ENCODE measurements at regions of chr19 and their contacts with region 1.

Region 1: GRCh38 chr19:47305309-47305751 is 4.3 kb upstream of the C5AR1 start:
- DNase-seq: peak; percentile 78 to 94 (median 80)
- H3K4me3 ChIP-seq: no peak overlapping the region
- H3K4me3 Mint-ChIP-seq: peak overlapping the region in 1 of 2 donors; percentile 23
- H3K27ac ChIP-seq: no peak overlapping the region
- H3K27ac Mint-ChIP-seq: peak overlapping the region in 3 of 7 donors; percentile 16 to 63 (median 42)
- H3K4me1 ChIP-seq: peaks cover 45 to 60% of the 10 kb centered on the region in 2 donors
- H3K4me1 Mint-ChIP-seq: peaks cover 44% of the 10 kb centered on the region
- H3K27me3 ChIP-seq: no peaks in the 10 kb centered on the region
- H3K27me3 Mint-ChIP-seq: peaks cover 7 to 24% (median 19%) of the 10 kb centered on the region in 3 donors
- CTCF ChIP-seq: peak; percentile 96

Region 2: DNA sequence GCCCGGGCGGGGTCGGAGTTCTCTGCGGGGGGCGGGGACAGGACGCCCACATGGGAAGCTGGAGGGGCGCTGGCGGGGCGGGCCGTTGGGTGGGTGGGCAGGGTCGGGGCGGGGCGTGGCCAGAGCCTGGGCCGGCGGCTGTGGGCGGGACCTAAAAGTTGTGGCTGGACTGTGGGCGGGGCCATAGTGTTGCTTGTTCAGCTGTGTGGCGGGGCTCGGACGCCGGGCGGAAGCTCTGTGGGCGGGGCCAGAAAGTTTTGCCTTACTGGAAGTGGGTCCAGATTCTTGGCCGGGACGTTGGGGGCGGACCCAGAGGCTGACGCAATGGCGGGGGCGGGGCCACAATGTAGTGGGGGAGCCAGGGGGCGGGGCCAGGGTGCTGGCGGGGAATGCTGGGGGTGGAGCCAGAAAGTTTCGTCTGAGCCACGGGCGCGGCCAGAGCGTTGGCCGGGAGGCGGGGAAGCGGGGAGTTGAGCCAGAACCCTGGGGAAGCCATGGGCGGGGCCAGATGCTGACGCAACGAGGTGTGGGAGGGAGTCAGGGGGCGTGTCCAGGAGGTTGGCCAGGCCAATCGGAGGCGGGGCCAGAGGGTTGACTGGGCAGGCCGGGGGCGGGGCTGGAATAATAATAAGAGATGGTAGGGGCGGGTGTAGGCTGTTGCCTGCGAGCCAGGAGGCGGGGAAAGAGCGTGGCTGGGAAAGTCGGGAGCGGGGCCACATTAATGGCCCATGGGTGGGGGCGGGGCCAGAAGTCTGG is 48.5 kb before region 1 on chr19:
- intact Hi-C with region 1: no loop called
- DNase-seq: peak; percentile 99
- H3K4me3 ChIP-seq: peak overlapping the region; percentile 54 to 80 (median 58)
- H3K4me3 Mint-ChIP-seq: peak overlapping the region; percentile 84 to 93
- H3K27ac ChIP-seq: peak overlapping the region; percentile 83 to 95
- H3K27ac Mint-ChIP-seq: peak overlapping the region; percentile 95 to 99 (median 97)
- H3K4me1 ChIP-seq: peaks cover 15 to 19% of the 10 kb centered on the region in 2 donors
- H3K4me1 Mint-ChIP-seq: peaks cover 18% of the 10 kb centered on the region
- H3K27me3 ChIP-seq: no peaks in the 10 kb centered on the region
- H3K27me3 Mint-ChIP-seq: peaks cover 0 to 8% (median 5%) of the 10 kb centered on the region in 3 donors
- CTCF ChIP-seq: no peak

Region 3: GRCh38 chr19:47324502-47324901 is 19.2 kb after region 1 on chr19:
- intact Hi-C with region 1: loop called in 1 of 2 experiments (anchors 2 kb)
- DNase-seq: peak; percentile 94 to 97 (median 96)
- H3K4me3 ChIP-seq: peak overlapping the region in 1 of 3 experiments; percentile 55
- H3K4me3 Mint-ChIP-seq: peak overlapping the region; percentile 61 to 77
- H3K27ac ChIP-seq: peak overlapping the region; percentile 73 to 91
- H3K27ac Mint-ChIP-seq: peak overlapping the region; percentile 89 to 99 (median 93)
- H3K4me1 ChIP-seq: peaks cover 59 to 77% of the 10 kb centered on the region in 2 donors
- H3K4me1 Mint-ChIP-seq: peaks cover 63% of the 10 kb centered on the region
- H3K27me3 ChIP-seq: no peaks in the 10 kb centered on the region
- H3K27me3 Mint-ChIP-seq: peaks cover 2 to 3% (median 2%) of the 10 kb centered on the region in 3 donors
- CTCF ChIP-seq: no peak

Region 4: GRCh38 chr19:47348819-47349795 is 43.8 kb after region 1 on chr19 and contains the start of gene DHX34:
- intact Hi-C with region 1: loop called in 1 of 2 experiments (anchors 5 kb)
- DNase-seq: peak; percentile 99
- H3K4me3 ChIP-seq: peak within 1 kb of the TSS; percentile 61 to 97 (median 85)
- H3K4me3 Mint-ChIP-seq: peak within 1 kb of the TSS; percentile 97
- H3K27ac ChIP-seq: peak within 1 kb of the TSS; percentile 83 to 98
- H3K27ac Mint-ChIP-seq: peak within 1 kb of the TSS; percentile 96 to 100 (median 99)
- H3K4me1 ChIP-seq: peaks cover 40 to 54% of the 10 kb centered on the region in 2 donors
- H3K4me1 Mint-ChIP-seq: peaks cover 47% of the 10 kb centered on the region
- H3K27me3 ChIP-seq: no peaks in the 10 kb centered on the region
- H3K27me3 Mint-ChIP-seq: peaks cover 0 to 3% (median 0%) of the 10 kb centered on the region in 3 donors
- CTCF ChIP-seq: peak; percentile 91
- polyA plus RNA-seq, gene DHX34: 3.4 to 34.4 (median 3.8) TPM